ENCODE measurements at regions of chr5 and their contacts with region 1.

Region 1: DNA sequence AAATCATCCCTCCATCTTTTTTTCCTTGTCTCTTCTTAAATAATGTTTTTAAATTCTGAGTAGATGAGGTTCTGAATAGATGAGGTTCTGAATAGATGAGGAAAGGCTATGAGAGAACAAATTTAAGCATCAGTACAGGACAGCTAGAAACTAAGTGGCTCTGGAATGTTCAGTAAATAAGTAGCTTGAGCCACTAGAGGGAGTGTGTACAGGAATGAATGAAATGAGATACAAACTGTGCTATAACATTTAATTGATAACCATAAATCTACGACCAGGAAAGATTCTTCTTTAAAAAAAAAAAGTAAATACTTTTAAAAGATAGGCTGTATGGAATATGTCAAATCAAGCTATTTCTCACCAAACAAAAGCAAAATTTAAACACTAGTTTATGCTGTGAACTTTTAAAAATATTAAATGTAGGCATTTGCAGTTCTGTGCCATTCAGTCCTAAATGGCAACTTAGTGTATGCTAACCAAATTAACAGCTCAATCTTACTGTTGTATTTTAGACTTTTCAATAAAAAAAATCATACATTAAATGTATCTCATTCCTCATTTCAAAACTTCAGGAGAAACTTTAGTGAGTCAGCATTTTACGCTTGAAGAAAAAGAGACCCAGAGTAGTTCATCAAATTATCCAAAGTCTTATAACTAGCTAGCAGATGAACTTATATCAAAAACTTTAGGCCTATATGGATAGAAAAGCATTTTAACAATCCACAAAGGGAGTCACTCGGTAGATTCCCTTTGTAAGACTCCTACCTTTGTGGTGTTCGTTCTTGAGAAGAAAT is 70.4 kb upstream of the SNX2 start:
- DNase-seq: peak; percentile 18
- H3K4me3 ChIP-seq: no peak overlapping the region
- H3K27ac ChIP-seq: no peak overlapping the region
- H3K27me3 ChIP-seq: no peaks in the 10 kb centered on the region
- CTCF ChIP-seq: peak; percentile 74

Region 2: GRCh38 chr5:122492664-122493063 is 211.8 kb before region 1 on chr5:
- CTCF ChIA-PET with region 1: no interaction called
- POLR2A ChIA-PET with region 1: no interaction called
- DNase-seq: no peak
- H3K4me3 ChIP-seq: no peak overlapping the region
- H3K27ac ChIP-seq: no peak overlapping the region
- H3K27me3 ChIP-seq: no peaks in the 10 kb centered on the region
- CTCF ChIP-seq: peak; percentile 52

Region 3: GRCh38 chr5:122639864-122640263 is 64.6 kb before region 1 on chr5:
- CTCF ChIA-PET with region 1: no interaction called
- POLR2A ChIA-PET with region 1: no interaction called
- DNase-seq: no peak
- H3K4me3 ChIP-seq: no peak overlapping the region
- H3K27ac ChIP-seq: no peak overlapping the region
- H3K27me3 ChIP-seq: no peaks in the 10 kb centered on the region
- CTCF ChIP-seq: no peak

Region 4: GRCh38 chr5:122690266-122690665 is 14.2 kb before region 1 on chr5:
- CTCF ChIA-PET with region 1: interaction called, 16 read pairs
- POLR2A ChIA-PET with region 1: no interaction called
- DNase-seq: no peak
- H3K4me3 ChIP-seq: no peak overlapping the region
- H3K27ac ChIP-seq: no peak overlapping the region
- H3K27me3 ChIP-seq: peaks cover 2% of the 10 kb centered on the region
- CTCF ChIP-seq: no peak

Region 5: DNA sequence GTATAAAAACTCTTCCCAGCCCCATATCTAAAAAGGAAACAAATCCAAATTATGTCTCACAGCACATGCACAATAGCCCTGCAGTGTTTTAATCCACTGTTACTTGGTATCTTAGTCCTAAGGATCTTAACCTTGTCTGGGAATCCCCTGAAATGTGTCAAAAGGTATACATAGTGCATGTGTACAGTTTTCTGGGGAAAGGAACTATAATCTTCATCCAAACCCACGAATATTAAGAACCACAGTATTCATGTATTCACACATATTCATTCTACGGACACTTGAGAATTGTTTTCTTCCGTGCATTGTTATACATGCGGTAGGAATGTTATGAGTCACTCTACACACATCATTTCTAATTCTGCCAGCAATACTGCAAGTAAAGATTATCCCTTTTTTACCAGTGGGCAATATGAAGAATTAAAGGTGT is 22.7 kb after region 1 on chr5:
- CTCF ChIA-PET with region 1: interaction called, 11 read pairs
- POLR2A ChIA-PET with region 1: no interaction called
- DNase-seq: no peak
- H3K4me3 ChIP-seq: no peak overlapping the region
- H3K27ac ChIP-seq: no peak overlapping the region
- H3K27me3 ChIP-seq: no peaks in the 10 kb centered on the region
- CTCF ChIP-seq: no peak

Region 6: GRCh38 chr5:122774861-122775549 is 70.6 kb after region 1 on chr5 and contains the start of gene SNX2:
- CTCF ChIA-PET with region 1: interaction called, 20 read pairs
- POLR2A ChIA-PET with region 1: no interaction called
- DNase-seq: peak; percentile 46
- H3K4me3 ChIP-seq: peak within 1 kb of the TSS; percentile 96
- H3K27ac ChIP-seq: peak within 1 kb of the TSS; percentile 49
- H3K27me3 ChIP-seq: no peaks in the 10 kb centered on the region
- CTCF ChIP-seq: peak; percentile 14; the same call in 1 of the 2 replicates
- polyA plus RNA-seq, gene SNX2: 47.6 and 63.9 TPM in 2 replicates

Region 7: DNA sequence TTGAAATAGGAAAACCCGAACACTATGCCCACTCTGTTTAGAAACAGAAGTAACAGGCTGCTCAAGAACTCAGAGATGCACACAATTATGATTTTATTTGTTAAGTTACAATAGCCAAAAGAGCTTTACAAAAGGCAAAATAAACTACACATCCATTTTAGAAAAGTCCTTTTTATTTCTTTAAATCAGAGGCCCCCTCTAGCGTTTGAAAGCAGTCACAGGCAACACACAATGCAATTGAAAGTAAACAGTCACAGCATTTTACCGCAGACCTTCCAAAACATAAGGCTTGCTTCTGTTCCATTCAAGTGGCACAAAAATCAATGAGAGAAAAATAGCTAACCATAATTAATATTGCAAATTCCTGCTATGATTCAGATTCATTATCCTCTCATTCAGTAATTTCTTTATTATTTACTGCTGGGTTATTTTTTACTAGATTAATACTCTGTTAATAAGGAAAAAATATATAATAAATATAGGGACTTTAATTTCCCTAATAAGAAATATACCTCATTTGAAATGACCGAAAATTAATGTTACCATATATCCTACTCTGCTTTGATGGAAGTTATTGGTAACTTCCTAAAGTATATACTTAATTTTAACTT is 640.5 kb after region 1 on chr5:
- CTCF ChIA-PET with region 1: interaction called, 22 read pairs
- POLR2A ChIA-PET with region 1: no interaction called
- DNase-seq: no peak
- H3K4me3 ChIP-seq: no peak overlapping the region
- H3K27ac ChIP-seq: no peak overlapping the region
- H3K27me3 ChIP-seq: no peaks in the 10 kb centered on the region
- CTCF ChIP-seq: peak; percentile 88